ENCODE measurements at regions of chr9 and their contacts with region 1.

Region 1: DNA sequence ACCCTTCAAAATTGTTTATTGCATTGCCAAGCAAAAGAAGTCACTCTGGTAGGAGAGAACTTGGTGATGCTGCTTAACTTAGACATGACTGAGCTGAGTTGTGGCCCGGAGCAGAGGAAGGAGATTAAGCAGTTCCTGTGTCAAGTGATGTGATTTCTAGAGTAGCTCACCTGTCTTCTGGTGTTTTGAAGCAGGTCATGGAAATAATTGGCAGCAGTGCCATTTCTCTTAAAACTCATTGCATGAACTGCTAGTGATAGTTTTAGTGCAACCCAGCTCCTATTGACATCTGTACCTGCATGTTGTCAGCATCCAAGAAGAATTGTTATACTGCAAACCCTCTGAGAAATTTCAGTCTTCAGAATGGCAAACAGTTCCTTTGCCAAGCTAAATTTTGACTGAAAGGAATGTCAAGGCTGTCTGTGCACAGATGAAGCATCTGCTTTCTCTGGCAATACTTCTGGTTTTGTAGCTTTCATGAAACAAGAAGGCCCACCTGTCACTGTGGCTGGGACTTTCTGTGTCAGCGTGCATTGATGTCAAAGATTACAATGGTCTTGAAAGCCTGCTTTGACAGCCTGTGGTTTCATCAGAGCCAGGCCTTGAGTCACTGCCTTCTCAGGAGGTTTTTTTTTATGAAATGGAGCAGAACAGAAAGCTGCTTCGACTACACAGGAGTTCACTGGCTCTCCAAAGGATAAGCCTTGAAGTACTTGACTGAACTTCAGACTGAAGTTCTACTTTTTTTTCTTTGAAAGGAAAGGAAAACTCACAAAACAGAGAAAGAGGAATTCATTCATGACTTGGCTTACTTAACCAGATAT is 90.6 kb downstream of the RALGPS1 start:
- DNase-seq: peak; percentile 38
- ATAC-seq: peak; percentile 98
- H3K4me3 Mint-ChIP-seq: peak overlapping the region; percentile 19
- H3K27ac Mint-ChIP-seq: peak overlapping the region; percentile 72
- H3K4me1 Mint-ChIP-seq: peaks cover 19% of the 10 kb centered on the region
- H3K27me3 Mint-ChIP-seq: peaks cover 6% of the 10 kb centered on the region

Region 2: GRCh38 chr9:126985870-126986498 is 19.2 kb before region 1 on chr9:
- POLR2A ChIA-PET with region 1: interaction called, 13 read pairs
- DNase-seq: peak; percentile 67
- ATAC-seq: peak; percentile 68
- H3K4me3 Mint-ChIP-seq: peak overlapping the region; percentile 69
- H3K27ac Mint-ChIP-seq: peak overlapping the region; percentile 84
- H3K4me1 Mint-ChIP-seq: peaks cover 32% of the 10 kb centered on the region
- H3K27me3 Mint-ChIP-seq: peaks cover 45% of the 10 kb centered on the region